ENCODE measurements at regions of chr1 and their contacts with region 1.

Region 1: GRCh38 chr1:147084273-147085096 is 87.8 kb downstream of the PRKAB2 start:
- DNase-seq: peak; percentile 82 to 94 (median 84)
- ATAC-seq: peak; percentile 92
- H3K4me3 ChIP-seq: peak overlapping the region; percentile 59
- H3K27ac ChIP-seq: peak overlapping the region; percentile 100
- H3K4me1 ChIP-seq: peaks cover 5 to 19% of the 10 kb centered on the region in 2 experiments; a peak in 4 of 5 replicates
- H3K27me3 ChIP-seq: peaks cover 11 to 16% of the 10 kb centered on the region in 2 experiments
- CTCF ChIP-seq: no peak
- EP300 ChIP-seq: peak; percentile 56
- POLR2A ChIP-seq: peak; percentile 100
- RAD21 ChIP-seq: no peak; a peak in 1 of 4 replicates

Region 2: GRCh38 chr1:147072370-147073061 is 12.0 kb before region 1 on chr1:
- CTCF ChIA-PET with region 1: no interaction called
- POLR2A ChIA-PET with region 1: interaction called, 23 read pairs
- in situ Hi-C with region 1: no loop called
- intact Hi-C with region 1: no loop called
- DNase-seq: no peak
- ATAC-seq: no peak; the same call in 1 of the 3 replicates
- H3K4me3 ChIP-seq: no peak overlapping the region
- H3K27ac ChIP-seq: no peak overlapping the region
- H3K4me1 ChIP-seq: peaks cover 0 to 8% of the 10 kb centered on the region in 2 experiments; a peak in 2 of 5 replicates
- H3K27me3 ChIP-seq: peaks cover 41 to 43% of the 10 kb centered on the region in 2 experiments
- CTCF ChIP-seq: no peak
- EP300 ChIP-seq: no peak
- POLR2A ChIP-seq: no peak
- RAD21 ChIP-seq: no peak

Region 3: DNA sequence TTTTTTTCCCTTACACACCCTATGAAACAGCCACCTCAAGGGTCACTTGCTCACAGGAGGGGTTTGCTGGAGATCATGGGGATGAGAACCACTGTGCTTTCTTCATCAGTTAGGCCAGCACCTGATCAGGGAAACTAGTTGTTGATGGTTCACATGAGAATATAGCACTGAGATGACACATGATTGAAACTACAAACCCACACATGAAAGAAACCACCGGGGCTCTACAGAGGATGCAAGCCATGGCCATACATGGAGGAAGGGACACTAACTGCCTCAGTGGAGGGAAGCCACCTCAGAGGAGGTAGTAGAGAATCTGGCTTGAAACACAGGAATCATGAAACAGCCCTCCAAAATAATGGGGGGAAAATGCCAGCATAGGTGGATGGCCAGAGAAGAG is 24.6 kb after region 1 on chr1:
- CTCF ChIA-PET with region 1: no interaction called
- POLR2A ChIA-PET with region 1: interaction called, 13 read pairs
- in situ Hi-C with region 1: no loop called
- intact Hi-C with region 1: no loop called
- DNase-seq: no peak
- ATAC-seq: no peak
- H3K4me3 ChIP-seq: no peak overlapping the region
- H3K27ac ChIP-seq: no peak overlapping the region
- H3K4me1 ChIP-seq: peaks cover 0 to 6% of the 10 kb centered on the region in 2 experiments; a peak in 1 of 5 replicates
- H3K27me3 ChIP-seq: peaks cover 2 to 29% of the 10 kb centered on the region in 2 experiments; a peak in 4 of 5 replicates
- CTCF ChIP-seq: no peak
- EP300 ChIP-seq: no peak
- POLR2A ChIP-seq: no peak
- RAD21 ChIP-seq: no peak

Region 4: DNA sequence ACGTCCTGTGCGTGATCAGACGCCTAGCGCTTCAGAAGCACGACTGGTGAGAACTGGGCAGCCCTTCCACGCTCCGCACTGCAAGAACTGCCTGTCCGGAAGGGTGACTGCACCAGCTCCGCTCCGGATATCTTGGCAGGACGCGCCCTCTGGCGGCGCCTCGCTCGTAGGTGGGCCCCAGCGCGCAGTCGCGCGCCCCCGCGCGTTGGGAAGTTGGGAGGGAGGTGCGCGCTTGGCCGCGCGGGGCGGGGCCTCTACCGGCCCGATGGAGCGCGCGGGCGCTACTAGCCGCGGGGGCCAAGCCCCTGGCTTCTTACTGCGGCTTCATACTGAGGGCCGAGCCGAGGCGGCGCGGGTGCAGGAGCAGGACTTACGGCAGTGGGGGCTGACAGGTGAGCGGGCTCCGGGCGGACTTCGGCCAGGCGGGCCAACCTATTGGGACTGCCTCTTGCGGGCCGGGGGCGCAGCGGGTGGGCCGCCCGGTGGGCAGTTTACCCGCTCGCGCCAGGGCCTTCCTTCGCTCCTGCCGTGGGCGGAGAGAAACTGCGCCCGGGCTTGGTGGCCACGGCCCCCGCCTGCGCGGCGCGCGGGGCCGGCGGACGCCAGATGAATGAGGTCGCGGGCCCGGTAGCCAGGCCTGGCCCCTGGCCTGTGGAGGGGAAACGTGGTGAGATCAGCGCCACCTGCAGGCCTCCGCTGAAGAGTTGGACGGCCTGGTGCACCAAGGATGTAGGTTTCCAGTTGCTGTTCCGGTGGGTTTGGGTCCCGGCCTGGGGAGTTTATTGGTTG is 158.1 kb after region 1 on chr1 and contains the start of gene CHD1L:
- CTCF ChIA-PET with region 1: no interaction called
- POLR2A ChIA-PET with region 1: interaction called, 26 read pairs
- in situ Hi-C with region 1: no loop called
- intact Hi-C with region 1: loop called (anchors 1 kb)
- DNase-seq: peak; percentile 91 to 97 (median 92)
- ATAC-seq: peak; percentile 89
- H3K4me3 ChIP-seq: peak within 1 kb of the TSS; percentile 87
- H3K27ac ChIP-seq: peak within 1 kb of the TSS; percentile 93
- H3K4me1 ChIP-seq: peaks cover 8 to 28% of the 10 kb centered on the region in 2 experiments
- H3K27me3 ChIP-seq: no peaks in the 10 kb centered on the region
- CTCF ChIP-seq: peak; percentile 93 to 99 (median 99)
- EP300 ChIP-seq: peak; percentile 10; the same call in 1 of the 2 replicates
- POLR2A ChIP-seq: peak; percentile 92
- RAD21 ChIP-seq: peak; percentile 95 to 97
- polyA plus RNA-seq, gene CHD1L: 25.0 to 38.9 TPM

Region 5: DNA sequence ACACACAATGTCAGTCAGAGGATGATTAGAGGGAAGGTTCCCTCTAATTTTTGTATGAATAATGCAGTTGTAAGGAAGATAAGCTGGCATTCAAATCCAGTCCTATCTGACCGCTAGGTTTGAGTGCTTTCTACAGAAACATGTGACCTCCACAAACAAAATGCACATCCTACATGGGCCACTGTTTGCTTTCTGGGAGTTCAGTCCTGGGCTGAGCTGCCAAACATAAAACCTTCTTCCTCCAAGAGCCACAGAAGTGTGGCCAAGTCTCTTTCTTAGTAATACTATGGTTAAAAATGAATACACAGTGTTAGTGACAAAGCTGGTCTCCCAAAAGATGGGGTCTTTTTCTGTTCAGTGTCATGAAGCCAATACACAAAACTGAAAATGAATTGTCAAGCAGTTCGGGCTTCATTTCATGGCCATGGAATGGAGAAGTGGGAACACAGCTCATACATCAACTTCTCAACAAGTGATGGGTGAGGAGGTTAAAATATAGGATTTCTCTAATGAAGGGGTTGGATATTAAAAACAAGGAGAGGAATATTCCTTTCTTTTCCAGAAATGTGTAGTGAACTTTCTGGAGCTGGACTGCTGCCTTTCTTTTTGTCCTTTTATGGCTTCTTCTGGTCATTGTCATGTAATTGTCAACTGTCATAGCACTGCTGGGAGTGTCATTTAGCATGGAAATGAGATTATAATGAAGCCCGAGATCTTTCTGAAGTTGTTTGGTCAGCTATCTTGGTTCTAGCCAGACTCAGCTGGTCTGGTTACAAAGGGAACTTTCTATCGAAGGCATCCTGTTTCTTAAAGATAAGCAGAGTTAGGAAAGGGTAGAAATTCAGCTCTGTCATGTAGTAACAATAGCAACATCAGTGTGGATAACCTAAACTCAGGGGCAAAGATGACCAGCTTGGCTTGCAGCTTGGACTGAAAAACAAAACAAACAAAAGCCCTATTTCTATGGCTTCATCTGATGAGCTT is 293.1 kb after region 1 on chr1:
- CTCF ChIA-PET with region 1: no interaction called
- POLR2A ChIA-PET with region 1: no interaction called
- in situ Hi-C with region 1: no loop called
- intact Hi-C with region 1: no loop called
- DNase-seq: peak; percentile 62 to 92 (median 74)
- ATAC-seq: peak; percentile 94
- H3K4me3 ChIP-seq: no peak overlapping the region
- H3K27ac ChIP-seq: peak overlapping the region; percentile 97
- H3K4me1 ChIP-seq: peaks cover 10 to 34% of the 10 kb centered on the region in 2 experiments; a peak in 4 of 5 replicates
- H3K27me3 ChIP-seq: no peaks in the 10 kb centered on the region
- CTCF ChIP-seq: no peak
- EP300 ChIP-seq: peak; percentile 94
- POLR2A ChIP-seq: peak; percentile 44; the same call in 1 of the 2 replicates
- RAD21 ChIP-seq: no peak

Measured in K562 (cell line).